CD4-positive, alpha-beta T cell (primary cell): ENCODE measurements at regions of chr19 and their contacts with region 1.

Region 1: GRCh38 chr19:4815426-4816201 is 15.9 kb downstream of the TICAM1 start:
- DNase-seq: peak; percentile 51 to 88 (median 64)
- ATAC-seq: peak; percentile 87
- H3K4me3 ChIP-seq: peak overlapping the region; percentile 24
- H3K4me3 Mint-ChIP-seq: peak overlapping the region; percentile 52
- H3K27ac ChIP-seq: no peak overlapping the region
- H3K27ac Mint-ChIP-seq: peak overlapping the region; percentile 8
- H3K4me1 ChIP-seq: peaks cover 17% of the 10 kb centered on the region
- H3K4me1 Mint-ChIP-seq: peaks cover 17% of the 10 kb centered on the region
- H3K27me3 ChIP-seq: no peaks in the 10 kb centered on the region
- H3K27me3 Mint-ChIP-seq: no peaks in the 10 kb centered on the region
- CTCF ChIP-seq: no peak

Region 2: GRCh38 chr19:4576016-4576933 is 239.3 kb before region 1 on chr19:
- CTCF ChIA-PET with region 1: no interaction called
- POLR2A ChIA-PET with region 1: no interaction called
- intact Hi-C with region 1: no loop called
- DNase-seq: peak; percentile 52 to 78 (median 64)
- ATAC-seq: peak; percentile 62
- H3K4me3 ChIP-seq: no peak overlapping the region
- H3K4me3 Mint-ChIP-seq: no peak overlapping the region
- H3K27ac ChIP-seq: no peak overlapping the region
- H3K27ac Mint-ChIP-seq: no peak overlapping the region
- H3K4me1 ChIP-seq: no peaks in the 10 kb centered on the region
- H3K4me1 Mint-ChIP-seq: no peaks in the 10 kb centered on the region
- H3K27me3 ChIP-seq: peaks cover 39 to 58% of the 10 kb centered on the region in 2 experiments
- H3K27me3 Mint-ChIP-seq: peaks cover 47% of the 10 kb centered on the region
- CTCF ChIP-seq: peak; percentile 65

Region 3: GRCh38 chr19:4851551-4852290 is 36.1 kb after region 1 on chr19:
- CTCF ChIA-PET with region 1: interaction called, 76 read pairs
- POLR2A ChIA-PET with region 1: no interaction called
- intact Hi-C with region 1: no loop called
- DNase-seq: peak; percentile 63 to 85 (median 70)
- ATAC-seq: peak; percentile 84
- H3K4me3 ChIP-seq: no peak overlapping the region
- H3K4me3 Mint-ChIP-seq: no peak overlapping the region
- H3K27ac ChIP-seq: no peak overlapping the region
- H3K27ac Mint-ChIP-seq: no peak overlapping the region
- H3K4me1 ChIP-seq: peaks cover 5% of the 10 kb centered on the region
- H3K4me1 Mint-ChIP-seq: no peaks in the 10 kb centered on the region
- H3K27me3 ChIP-seq: no peaks in the 10 kb centered on the region
- H3K27me3 Mint-ChIP-seq: no peaks in the 10 kb centered on the region
- CTCF ChIP-seq: peak; percentile 73

Region 4: GRCh38 chr19:4867534-4868285 is 52.1 kb after region 1 on chr19 and contains the start of gene PLIN3:
- CTCF ChIA-PET with region 1: interaction called, 13 read pairs
- POLR2A ChIA-PET with region 1: no interaction called
- intact Hi-C with region 1: loop called in 1 of 2 experiments (anchors 1 kb)
- DNase-seq: peak; percentile 83 to 94 (median 89)
- ATAC-seq: peak; percentile 93
- H3K4me3 ChIP-seq: peak within 1 kb of the TSS; percentile 89
- H3K4me3 Mint-ChIP-seq: peak within 1 kb of the TSS; percentile 88
- H3K27ac ChIP-seq: peak within 1 kb of the TSS in 1 of 2 donors; percentile 70
- H3K27ac Mint-ChIP-seq: peak within 1 kb of the TSS; percentile 69
- H3K4me1 ChIP-seq: peaks cover 26% of the 10 kb centered on the region
- H3K4me1 Mint-ChIP-seq: peaks cover 11% of the 10 kb centered on the region
- H3K27me3 ChIP-seq: no peaks in the 10 kb centered on the region
- H3K27me3 Mint-ChIP-seq: peaks cover 3% of the 10 kb centered on the region
- CTCF ChIP-seq: no peak
- total RNA-seq, gene PLIN3: 18.2 to 19.1 TPM

Region 5: GRCh38 chr19:4873930-4874329 is 58.3 kb after region 1 on chr19:
- CTCF ChIA-PET with region 1: interaction called, 13 read pairs
- POLR2A ChIA-PET with region 1: no interaction called
- intact Hi-C with region 1: no loop called
- DNase-seq: no peak
- ATAC-seq: no peak
- H3K4me3 ChIP-seq: no peak overlapping the region
- H3K4me3 Mint-ChIP-seq: no peak overlapping the region
- H3K27ac ChIP-seq: no peak overlapping the region
- H3K27ac Mint-ChIP-seq: no peak overlapping the region
- H3K4me1 ChIP-seq: peaks cover 18% of the 10 kb centered on the region
- H3K4me1 Mint-ChIP-seq: peaks cover 4% of the 10 kb centered on the region
- H3K27me3 ChIP-seq: no peaks in the 10 kb centered on the region
- H3K27me3 Mint-ChIP-seq: peaks cover 11% of the 10 kb centered on the region
- CTCF ChIP-seq: no peak

Region 6: DNA sequence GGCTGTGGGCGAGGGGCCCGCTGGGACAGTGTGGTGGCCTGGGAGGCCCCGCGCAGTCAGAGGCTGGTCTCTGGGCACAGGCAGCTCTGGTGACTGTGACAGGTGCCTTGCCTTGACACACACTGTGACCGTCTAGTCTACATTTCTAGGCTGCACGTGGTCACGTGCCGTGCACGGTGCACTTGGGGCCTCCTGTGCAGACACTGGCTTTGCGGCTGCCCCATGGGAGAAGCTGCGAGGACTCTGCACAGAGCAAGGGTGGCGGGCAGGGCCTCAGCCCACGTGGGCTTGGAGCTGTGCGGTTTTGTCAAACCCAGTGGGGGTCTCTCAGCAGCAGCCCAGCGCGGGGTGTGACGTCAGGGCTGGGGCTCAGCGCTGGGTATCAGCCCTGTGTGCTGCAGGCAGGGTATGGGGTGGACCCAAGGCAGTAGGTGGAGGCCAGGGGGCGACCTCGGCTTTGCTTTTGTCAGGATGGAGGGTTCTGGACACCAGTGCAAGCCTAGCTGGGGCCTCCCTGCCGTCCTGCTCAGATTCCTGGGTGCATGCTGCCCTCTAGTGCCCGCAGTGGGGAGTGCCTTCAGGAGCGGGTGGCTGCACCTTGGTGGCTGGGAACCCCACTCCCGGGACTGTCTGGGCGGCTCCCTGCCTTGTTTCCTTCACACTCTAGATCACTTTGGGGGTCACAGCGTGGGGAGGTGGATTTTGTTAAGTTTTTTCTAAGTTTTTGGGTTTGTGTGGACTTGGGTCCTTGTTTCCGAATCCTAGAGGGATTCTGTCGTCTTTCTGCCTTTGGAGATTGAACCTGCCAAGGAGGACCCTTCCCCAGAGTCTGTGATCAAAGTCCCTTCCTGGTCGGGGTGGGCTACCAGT is 215.9 kb after region 1 on chr19:
- CTCF ChIA-PET with region 1: interaction called, 20 read pairs
- POLR2A ChIA-PET with region 1: no interaction called
- intact Hi-C with region 1: loop called in 1 of 2 experiments (anchors 1 kb)
- DNase-seq: peak; percentile 59 to 87 (median 78)
- ATAC-seq: peak; percentile 89
- H3K4me3 ChIP-seq: no peak overlapping the region
- H3K4me3 Mint-ChIP-seq: no peak overlapping the region
- H3K27ac ChIP-seq: no peak overlapping the region
- H3K27ac Mint-ChIP-seq: no peak overlapping the region
- H3K4me1 ChIP-seq: peaks cover 13% of the 10 kb centered on the region
- H3K4me1 Mint-ChIP-seq: no peaks in the 10 kb centered on the region
- H3K27me3 ChIP-seq: no peaks in the 10 kb centered on the region
- H3K27me3 Mint-ChIP-seq: no peaks in the 10 kb centered on the region
- CTCF ChIP-seq: peak; percentile 92